Heart right ventricle (tissue), 16 donors: ENCODE measurements at regions of chr7 and their contacts with region 1.

Region 1: DNA sequence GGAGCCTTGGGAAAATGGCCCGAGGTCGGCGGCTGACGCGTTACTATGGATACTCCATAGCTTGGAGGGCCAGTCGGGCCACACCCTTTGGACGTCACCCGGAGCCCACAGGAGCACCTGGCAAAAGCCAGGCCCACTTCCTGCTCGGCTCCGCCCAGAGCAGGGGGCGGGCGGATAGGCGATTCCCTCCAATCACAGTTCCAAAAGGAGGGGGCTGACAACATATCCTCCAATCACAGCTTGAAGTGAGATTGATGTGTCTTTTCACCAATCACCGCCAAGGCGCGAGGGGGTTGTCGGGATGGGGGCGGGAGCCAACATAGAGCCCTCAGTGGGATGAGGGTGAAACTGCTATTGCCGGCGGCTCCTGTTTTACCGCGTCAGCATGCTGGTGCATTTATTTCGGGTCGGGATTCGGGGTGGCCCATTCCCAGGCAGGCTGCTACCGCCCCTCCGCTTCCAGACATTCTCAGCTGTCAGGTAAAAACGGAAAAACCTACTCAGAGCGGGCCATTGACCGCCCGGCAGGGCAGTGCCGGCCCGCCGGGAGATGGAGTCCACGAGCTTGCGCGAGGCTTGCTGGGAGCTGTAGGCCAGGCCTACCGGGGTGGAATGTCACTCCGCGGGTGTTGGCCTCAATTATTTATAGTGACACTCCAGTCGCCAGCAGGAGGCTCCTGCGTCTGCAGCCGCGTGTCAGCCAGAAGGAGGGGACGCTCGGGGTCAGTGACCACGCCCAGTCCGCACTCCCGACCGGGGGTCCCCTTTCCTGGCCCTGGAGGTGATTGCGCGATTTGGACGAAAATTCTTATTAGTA is at the start of gene ABCB8:
- DNase-seq: peak; percentile 95 to 100
- ATAC-seq: peak; percentile 94 to 98 (median 96)
- H3K4me3 ChIP-seq: peak within 1 kb of the TSS; percentile 29 to 84 (median 74)
- H3K27ac ChIP-seq: peak within 1 kb of the TSS; percentile 36 to 91 (median 82)
- H3K4me1 ChIP-seq: peaks cover 3 to 21% (median 14%) of the 10 kb centered on the region in 9 donors
- H3K27me3 ChIP-seq: peaks cover 0 to 3% (median 0%) of the 10 kb centered on the region in 7 donors
- CTCF ChIP-seq: peak in 8 of 9 donors; percentile 39 to 82 (median 64)
- total RNA-seq, gene ABCB8: 20.9 to 32.4 (median 24.6) TPM

Region 2: DNA sequence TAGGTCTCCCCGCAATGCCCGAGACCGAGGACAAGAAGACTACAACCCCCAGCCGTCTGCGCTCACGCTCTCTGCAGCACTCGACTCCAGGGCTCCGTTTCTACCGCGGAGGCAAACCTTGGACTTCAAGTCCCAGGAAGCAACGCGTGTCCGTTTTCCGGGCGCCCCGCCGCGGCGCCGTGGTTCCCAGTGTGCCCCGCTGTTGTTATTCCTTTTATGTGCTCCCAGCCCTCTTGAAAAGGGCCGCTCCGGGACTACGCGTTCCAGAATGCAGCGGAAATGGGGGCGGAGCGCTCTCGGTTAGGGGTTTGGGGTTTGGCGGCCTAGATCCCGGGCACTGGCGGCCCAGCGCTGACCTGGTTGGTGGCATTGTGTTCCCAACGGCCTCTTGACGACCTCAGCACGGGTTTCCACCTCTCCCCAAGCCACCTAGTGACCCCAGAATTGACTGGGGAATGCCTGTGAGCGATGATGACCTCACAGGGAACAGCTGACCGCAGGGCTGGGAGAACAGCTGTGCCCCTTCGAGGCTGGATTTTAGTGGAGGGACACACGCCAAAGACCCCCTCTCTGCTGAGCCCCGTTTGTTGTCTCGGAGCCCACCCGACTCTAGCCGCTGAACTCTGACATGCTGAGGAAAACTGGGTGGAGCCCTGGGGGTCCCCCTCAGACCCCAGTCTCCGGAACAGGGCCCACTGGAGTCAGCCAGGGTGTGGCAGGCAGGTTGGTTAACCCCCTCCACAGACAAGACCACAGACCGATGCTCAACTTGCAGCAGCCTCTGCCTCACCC is 29.8 kb after region 1 on chr7:
- intact Hi-C with region 1: loop called in 4 of 10 experiments (anchors 1 to 2 kb)
- DNase-seq: peak; percentile 98 to 99
- ATAC-seq: peak; percentile 89 to 93 (median 90)
- H3K4me3 ChIP-seq: peak overlapping the region; percentile 22 to 95 (median 88)
- H3K27ac ChIP-seq: peak overlapping the region; percentile 94 to 98 (median 97)
- H3K4me1 ChIP-seq: peaks cover 33 to 55% (median 50%) of the 10 kb centered on the region in 9 donors
- H3K27me3 ChIP-seq: no peaks in the 10 kb centered on the region
- CTCF ChIP-seq: peak in 1 of 9 donors; percentile 18

Region 3: DNA sequence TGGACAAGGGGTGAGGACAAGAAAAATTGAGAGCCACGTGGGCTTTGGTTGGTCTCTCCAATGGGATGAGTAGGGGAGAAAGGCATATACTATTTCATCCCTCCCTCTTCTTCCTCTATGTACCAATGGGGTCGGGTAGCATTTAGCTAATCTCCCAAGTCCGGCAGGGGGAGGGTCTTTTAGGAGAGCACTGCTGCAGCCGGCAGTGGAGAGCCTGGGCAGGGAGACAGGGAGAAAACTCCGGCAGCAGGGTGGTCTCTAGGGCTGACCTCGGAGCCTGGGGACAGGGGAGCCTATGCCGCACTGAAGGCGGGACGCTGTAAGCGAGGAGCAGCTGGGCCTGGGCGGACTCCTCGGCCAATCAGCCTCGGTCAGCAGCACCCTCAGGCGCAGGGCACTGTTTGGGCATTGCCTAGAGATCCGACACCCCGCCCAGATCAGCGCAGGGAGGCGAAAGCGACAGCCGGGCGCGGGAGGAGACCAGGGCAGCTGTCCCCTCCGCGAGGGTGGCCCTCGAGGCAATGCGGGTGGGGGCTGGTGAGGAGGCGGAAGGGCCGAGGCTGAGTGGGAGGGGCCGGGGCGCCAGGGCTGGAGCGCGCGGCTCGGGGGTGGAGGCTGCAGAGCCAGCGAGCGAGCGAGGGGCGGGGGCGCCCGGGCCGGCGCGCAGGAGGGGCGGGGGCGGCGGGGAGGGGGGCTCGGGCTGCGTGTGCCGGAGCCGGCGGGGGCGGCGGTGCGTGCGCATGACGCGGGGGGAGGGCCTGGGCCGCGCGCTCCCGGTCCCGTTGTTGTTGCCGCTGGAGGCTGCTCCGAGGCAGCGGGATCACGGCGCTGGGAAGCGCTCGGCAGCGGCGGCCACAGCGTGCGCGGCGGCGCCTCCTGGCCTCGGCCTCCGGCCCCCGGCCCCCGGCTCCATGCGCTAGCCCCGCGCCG is 57.6 kb after region 1 on chr7 and contains the start of gene AGAP3:
- intact Hi-C with region 1: loop called in 2 of 10 experiments (anchors 2 to 5 kb)
- DNase-seq: peak; percentile 89 to 91
- ATAC-seq: peak; percentile 59 to 72 (median 66)
- H3K4me3 ChIP-seq: peak within 1 kb of the TSS; percentile 69 to 88 (median 78)
- H3K27ac ChIP-seq: peak within 1 kb of the TSS; percentile 81 to 94 (median 90)
- H3K4me1 ChIP-seq: peaks cover 41 to 72% (median 69%) of the 10 kb centered on the region in 9 donors
- H3K27me3 ChIP-seq: no peaks in the 10 kb centered on the region
- CTCF ChIP-seq: no peak
- total RNA-seq, gene AGAP3: 40.5 to 93.4 (median 50.3) TPM

Region 4: DNA sequence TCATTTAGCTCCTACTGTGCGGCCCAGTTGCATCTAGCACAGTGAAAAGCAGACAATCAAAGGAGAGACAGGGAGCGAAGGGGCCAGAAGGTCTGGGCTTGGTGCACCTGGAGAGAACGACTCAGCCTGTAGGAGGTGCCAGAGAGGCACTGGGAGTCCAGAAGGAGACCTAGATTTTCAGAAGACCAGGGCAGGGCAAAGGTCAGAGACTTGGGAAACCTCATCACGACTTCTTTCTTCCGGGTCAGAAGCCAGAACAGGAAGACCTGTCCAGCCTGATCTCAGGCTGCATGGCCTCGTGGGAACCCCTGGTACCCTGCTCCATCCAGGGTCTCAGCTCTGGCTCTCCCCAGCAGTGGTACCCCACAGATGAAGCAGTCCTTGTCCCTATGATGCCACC is 63.1 kb after region 1 on chr7:
- intact Hi-C with region 1: loop called in 2 of 10 experiments (anchors 2 to 5 kb)
- DNase-seq: no peak
- ATAC-seq: no peak
- H3K4me3 ChIP-seq: no peak overlapping the region
- H3K27ac ChIP-seq: peak overlapping the region in 2 of 10 donors; percentile 93 to 94
- H3K4me1 ChIP-seq: peaks cover 23 to 73% (median 48%) of the 10 kb centered on the region in 9 donors
- H3K27me3 ChIP-seq: no peaks in the 10 kb centered on the region
- CTCF ChIP-seq: peak in 8 of 9 donors; percentile 17 to 58 (median 42)